ENCODE measurements at regions of chr2 and their contacts with region 1.

Region 1: DNA sequence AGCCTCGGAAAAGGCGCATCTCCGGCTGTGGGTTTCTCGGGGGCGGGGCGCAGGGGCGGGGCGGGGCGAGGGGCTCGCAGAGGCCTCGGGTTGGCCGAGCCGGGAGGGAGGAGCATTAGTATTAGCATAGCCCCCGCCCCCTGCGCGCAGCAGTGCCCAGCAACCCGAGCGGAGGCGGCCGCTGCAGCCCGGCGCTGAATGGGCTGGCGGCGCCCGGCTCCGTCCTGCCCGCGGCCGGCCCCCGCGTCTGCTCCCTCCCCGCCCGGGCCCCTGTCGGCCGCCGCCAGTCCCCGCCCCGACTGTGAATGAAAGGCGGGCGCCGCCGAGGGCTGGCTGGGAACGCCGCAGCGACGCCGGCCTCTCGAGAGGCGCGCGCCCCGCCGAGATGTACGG is at the start of gene EFR3B:
- DNase-seq: peak; percentile 93
- ATAC-seq: peak; percentile 84
- H3K4me3 Mint-ChIP-seq: peak within 1 kb of the TSS; percentile 71
- H3K27ac Mint-ChIP-seq: no peak within 1 kb of the TSS
- H3K4me1 Mint-ChIP-seq: peaks cover 32% of the 10 kb centered on the region
- H3K27me3 Mint-ChIP-seq: peaks cover 38% of the 10 kb centered on the region
- total RNA-seq, gene EFR3B: 1.0 to 1.1 TPM

Region 2: GRCh38 chr2:24360050-24360962 is 681.6 kb before region 1 on chr2 and contains the start of gene ITSN2:
- CTCF ChIA-PET with region 1: no interaction called
- POLR2A ChIA-PET with region 1: no interaction called
- intact Hi-C with region 1: loop called in 1 of 2 experiments (anchors 2 kb)
- DNase-seq: peak; percentile 90
- ATAC-seq: peak; percentile 89
- H3K4me3 Mint-ChIP-seq: peak within 1 kb of the TSS; percentile 84
- H3K27ac Mint-ChIP-seq: peak within 1 kb of the TSS; percentile 94
- H3K4me1 Mint-ChIP-seq: peaks cover 29% of the 10 kb centered on the region
- H3K27me3 Mint-ChIP-seq: no peaks in the 10 kb centered on the region
- total RNA-seq, gene ITSN2: 46.0 to 49.6 TPM

Region 3: GRCh38 chr2:24471662-24472061 is 570.3 kb before region 1 on chr2:
- CTCF ChIA-PET with region 1: no interaction called
- POLR2A ChIA-PET with region 1: no interaction called
- intact Hi-C with region 1: no loop called
- DNase-seq: no peak
- ATAC-seq: peak; percentile 78
- H3K4me3 Mint-ChIP-seq: no peak overlapping the region
- H3K27ac Mint-ChIP-seq: no peak overlapping the region
- H3K4me1 Mint-ChIP-seq: no peaks in the 10 kb centered on the region
- H3K27me3 Mint-ChIP-seq: peaks cover 5% of the 10 kb centered on the region

Region 4: DNA sequence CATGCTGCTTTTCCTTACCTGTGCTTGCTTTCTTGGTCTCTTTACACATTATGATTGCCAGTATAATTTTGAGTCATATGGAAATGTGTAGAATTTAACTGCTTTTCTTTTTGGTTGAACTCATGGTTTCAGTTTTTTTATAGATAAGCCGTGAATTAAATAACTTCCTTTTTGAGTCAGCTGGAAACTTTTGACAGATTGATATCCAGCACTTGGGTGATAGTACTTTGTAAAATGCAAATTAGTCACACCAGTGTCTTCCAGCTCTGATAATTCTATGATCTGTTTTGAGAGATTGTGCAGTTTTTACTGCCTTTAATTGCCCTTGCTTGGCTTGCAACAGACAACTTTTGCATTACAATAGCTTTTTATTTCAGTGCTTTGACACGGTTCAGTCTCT is 464.4 kb before region 1 on chr2:
- CTCF ChIA-PET with region 1: no interaction called
- POLR2A ChIA-PET with region 1: no interaction called
- intact Hi-C with region 1: loop called in 1 of 2 experiments (anchors 2 kb)
- DNase-seq: no peak
- ATAC-seq: peak; percentile 76
- H3K4me3 Mint-ChIP-seq: peak overlapping the region; percentile 3
- H3K27ac Mint-ChIP-seq: peak overlapping the region; percentile 79
- H3K4me1 Mint-ChIP-seq: peaks cover 76% of the 10 kb centered on the region
- H3K27me3 Mint-ChIP-seq: no peaks in the 10 kb centered on the region

Region 5: GRCh38 chr2:24920098-24920808 is 121.7 kb before region 1 on chr2 and contains the start of gene ADCY3:
- CTCF ChIA-PET with region 1: no interaction called
- POLR2A ChIA-PET with region 1: no interaction called
- intact Hi-C with region 1: loop called in 1 of 2 experiments (anchors 1 kb)
- DNase-seq: peak; percentile 79
- ATAC-seq: peak; percentile 59
- H3K4me3 Mint-ChIP-seq: peak within 1 kb of the TSS; percentile 83
- H3K27ac Mint-ChIP-seq: peak within 1 kb of the TSS; percentile 90
- H3K4me1 Mint-ChIP-seq: peaks cover 33% of the 10 kb centered on the region
- H3K27me3 Mint-ChIP-seq: peaks cover 1% of the 10 kb centered on the region
- total RNA-seq, gene ADCY3: 59.5 to 92.8 TPM

Region 6: DNA sequence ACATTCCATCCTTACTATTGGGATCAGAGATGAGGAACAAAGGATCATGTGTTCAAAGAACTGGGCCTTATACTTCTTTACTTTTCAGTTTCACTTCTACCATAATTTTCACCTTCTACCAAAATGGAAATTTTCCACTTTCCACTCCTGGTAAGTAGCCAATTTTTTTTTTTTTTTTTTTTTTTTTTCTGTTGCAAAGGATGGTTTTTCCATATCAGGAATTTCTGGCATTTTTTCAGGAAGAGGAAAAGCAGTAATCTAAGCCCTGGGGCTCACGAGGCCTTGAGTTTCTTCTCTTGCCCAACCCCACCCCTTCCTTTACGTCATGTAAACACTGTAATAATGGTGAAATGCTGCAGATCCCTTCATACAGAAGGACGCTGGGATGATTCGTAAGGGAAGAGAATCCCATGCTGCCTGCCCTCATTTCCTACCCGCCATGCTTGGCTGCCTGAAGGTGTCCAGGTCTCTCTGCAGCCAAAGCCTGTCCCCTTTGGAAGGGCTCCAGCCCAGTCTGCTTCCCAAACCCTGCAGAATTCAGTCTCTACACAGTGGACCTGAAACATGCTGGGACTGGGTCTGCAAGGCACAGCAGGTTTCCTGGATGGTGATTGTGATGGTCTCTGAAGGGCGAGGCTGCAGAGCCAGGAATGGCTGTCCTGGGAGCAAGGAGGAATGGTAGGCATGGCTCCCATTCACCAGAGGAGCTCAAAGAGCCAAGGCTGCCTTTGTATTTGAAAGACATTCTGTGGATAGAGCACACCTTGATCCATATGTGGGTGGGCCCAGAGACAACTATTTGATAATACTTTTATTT is 57.0 kb after region 1 on chr2:
- CTCF ChIA-PET with region 1: no interaction called
- POLR2A ChIA-PET with region 1: no interaction called
- intact Hi-C with region 1: loop called (anchors 1 to 10 kb)
- DNase-seq: no peak
- ATAC-seq: no peak
- H3K4me3 Mint-ChIP-seq: no peak overlapping the region
- H3K27ac Mint-ChIP-seq: no peak overlapping the region
- H3K4me1 Mint-ChIP-seq: peaks cover 18% of the 10 kb centered on the region
- H3K27me3 Mint-ChIP-seq: peaks cover 2% of the 10 kb centered on the region

Region 7: DNA sequence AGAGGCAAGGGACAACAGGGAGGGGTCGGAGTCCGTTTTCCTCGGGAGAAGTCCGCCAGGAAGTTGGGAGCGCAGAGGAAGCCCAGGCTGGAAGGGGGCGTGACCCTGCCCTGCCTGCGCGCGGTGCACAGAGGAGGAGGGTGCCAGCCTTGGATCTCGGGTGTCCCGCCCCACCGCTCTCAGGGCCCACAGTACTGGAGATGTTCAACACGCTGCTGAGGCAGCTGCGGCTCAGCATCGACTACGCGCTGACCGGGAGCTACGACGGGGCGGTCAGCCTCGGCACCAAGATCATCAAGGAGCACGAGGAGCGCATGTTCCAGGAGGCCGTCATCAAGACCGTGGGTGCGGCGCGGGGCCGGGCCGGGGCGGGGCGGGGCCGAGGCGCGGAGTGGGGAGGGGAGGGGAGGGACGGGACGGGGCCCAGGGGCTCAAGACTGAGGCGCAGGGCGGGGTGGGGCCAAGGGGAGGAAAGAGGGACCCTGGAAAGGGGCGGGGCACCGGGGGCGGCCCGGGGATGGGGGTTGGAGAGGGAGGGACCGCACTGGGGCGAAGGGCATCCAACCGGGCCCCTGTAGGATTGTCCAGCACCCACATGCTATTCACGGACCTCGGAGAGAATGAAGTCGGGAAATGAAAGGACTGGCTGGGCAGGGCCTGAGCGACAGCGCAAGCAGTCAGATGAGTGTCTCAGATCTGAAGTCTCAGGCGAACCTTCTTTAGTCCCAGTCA is 89.8 kb after region 1 on chr2:
- CTCF ChIA-PET with region 1: interaction called, 3 read pairs
- POLR2A ChIA-PET with region 1: no interaction called
- intact Hi-C with region 1: loop called in 1 of 2 experiments (anchors 1 kb)
- DNase-seq: peak; percentile 39
- ATAC-seq: peak; percentile 47
- H3K4me3 Mint-ChIP-seq: peak overlapping the region; percentile 38
- H3K27ac Mint-ChIP-seq: no peak overlapping the region
- H3K4me1 Mint-ChIP-seq: peaks cover 11% of the 10 kb centered on the region
- H3K27me3 Mint-ChIP-seq: peaks cover 47% of the 10 kb centered on the region

Region 8: DNA sequence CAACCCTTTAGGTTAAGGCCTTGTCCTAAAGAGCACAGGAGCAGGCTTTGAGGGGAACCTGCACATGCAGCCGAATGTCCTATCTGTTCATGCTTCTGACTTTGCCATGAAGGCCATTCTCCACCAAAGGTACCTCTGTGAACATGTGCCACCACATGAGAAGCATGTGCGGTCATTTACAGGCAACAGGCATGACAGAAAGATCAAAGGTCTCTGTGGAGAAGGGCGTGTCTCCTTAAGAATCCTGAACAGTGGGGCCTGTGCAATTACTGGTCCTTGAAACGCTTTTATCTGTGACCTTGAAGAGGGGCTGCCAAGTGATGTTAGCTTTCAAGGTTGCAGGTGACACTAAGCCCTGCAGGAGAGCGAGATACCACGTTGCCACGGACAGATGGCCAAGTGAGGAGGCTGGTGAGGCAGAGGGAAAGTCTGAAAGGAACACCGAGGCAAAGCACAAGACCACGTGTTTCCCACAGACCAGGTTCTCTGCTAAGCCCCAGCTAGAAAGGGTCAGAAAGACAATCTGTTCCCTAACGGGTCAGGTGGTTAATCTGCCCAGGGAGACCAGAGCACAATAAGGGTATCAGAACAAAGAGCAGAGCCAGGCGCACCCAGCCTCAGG is 145.9 kb after region 1 on chr2:
- CTCF ChIA-PET with region 1: no interaction called
- POLR2A ChIA-PET with region 1: no interaction called
- intact Hi-C with region 1: no loop called
- DNase-seq: no peak
- ATAC-seq: no peak
- H3K4me3 Mint-ChIP-seq: no peak overlapping the region
- H3K27ac Mint-ChIP-seq: no peak overlapping the region
- H3K4me1 Mint-ChIP-seq: no peaks in the 10 kb centered on the region
- H3K27me3 Mint-ChIP-seq: peaks cover 4% of the 10 kb centered on the region

Measured in activated CD4-positive, alpha-beta T cell treated with anti-CD3 and anti-CD28 coated beads for 36 hours (primary cell).